IMR-90 (cell line): ENCODE measurements at regions of chr5 and their contacts with region 1.

Region 1: DNA sequence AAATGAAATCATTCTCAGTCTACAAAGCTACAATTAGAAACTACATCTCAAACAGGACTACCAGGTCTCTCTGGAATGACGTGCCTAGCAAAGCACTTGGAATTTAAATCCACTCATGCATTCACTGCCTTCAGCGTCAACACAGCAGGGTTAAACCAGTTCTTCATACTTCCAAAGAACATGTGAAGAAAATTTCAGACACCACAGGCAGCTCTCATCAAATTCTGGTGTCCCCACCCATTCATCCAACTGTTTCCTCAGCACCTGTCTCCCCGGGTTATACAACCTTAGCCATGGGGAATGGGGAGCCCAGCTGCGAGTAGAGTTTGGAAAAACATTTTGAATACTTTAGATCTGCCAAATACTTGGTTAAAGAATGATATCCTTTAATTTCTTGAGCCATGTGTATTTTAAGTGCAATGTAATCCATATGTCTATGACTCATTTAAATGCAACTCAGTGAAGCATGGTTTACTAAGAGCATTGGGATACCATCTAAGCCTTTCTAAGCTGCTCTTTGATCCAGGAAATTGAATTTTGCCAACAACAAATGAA is 17.5 kb downstream of the ADAM19 start:
- DNase-seq: peak; percentile 86
- ATAC-seq: peak; percentile 66
- H3K4me3 ChIP-seq: no peak overlapping the region
- H3K27ac ChIP-seq: peak overlapping the region; percentile 80
- H3K4me1 ChIP-seq: peaks cover 52% of the 10 kb centered on the region
- H3K27me3 ChIP-seq: no peaks in the 10 kb centered on the region
- CTCF ChIP-seq: no peak
- POLR2A ChIP-seq: no peak
- RAD21 ChIP-seq: no peak

Region 2: GRCh38 chr5:157219491-157220271 is 338.4 kb before region 1 on chr5:
- CTCF ChIA-PET with region 1: no interaction called
- POLR2A ChIA-PET with region 1: no interaction called
- dilution Hi-C with region 1: no loop called
- in situ Hi-C with region 1: no loop called
- intact Hi-C with region 1: no loop called
- DNase-seq: no peak
- ATAC-seq: no peak
- H3K4me3 ChIP-seq: no peak overlapping the region
- H3K27ac ChIP-seq: no peak overlapping the region
- H3K4me1 ChIP-seq: no peaks in the 10 kb centered on the region
- H3K27me3 ChIP-seq: peaks cover 2% of the 10 kb centered on the region; the same call in 1 of the 2 replicates
- CTCF ChIP-seq: no peak
- POLR2A ChIP-seq: no peak
- RAD21 ChIP-seq: no peak

Region 3: GRCh38 chr5:157591766-157592165 is 33.6 kb after region 1 on chr5:
- CTCF ChIA-PET with region 1: no interaction called
- POLR2A ChIA-PET with region 1: interaction called, 12 read pairs
- dilution Hi-C with region 1: no loop called
- in situ Hi-C with region 1: no loop called
- intact Hi-C with region 1: no loop called
- DNase-seq: no peak
- ATAC-seq: no peak
- H3K4me3 ChIP-seq: no peak overlapping the region
- H3K27ac ChIP-seq: no peak overlapping the region
- H3K4me1 ChIP-seq: peaks cover 4% of the 10 kb centered on the region
- H3K27me3 ChIP-seq: no peaks in the 10 kb centered on the region
- CTCF ChIP-seq: no peak
- POLR2A ChIP-seq: no peak
- RAD21 ChIP-seq: no peak